Activated CD4-positive, alpha-beta T cell treated with anti-CD3 and anti-CD28 coated beads for 36 hours (primary cell): ENCODE measurements at regions of chr5 and their contacts with region 1.

Region 1: DNA sequence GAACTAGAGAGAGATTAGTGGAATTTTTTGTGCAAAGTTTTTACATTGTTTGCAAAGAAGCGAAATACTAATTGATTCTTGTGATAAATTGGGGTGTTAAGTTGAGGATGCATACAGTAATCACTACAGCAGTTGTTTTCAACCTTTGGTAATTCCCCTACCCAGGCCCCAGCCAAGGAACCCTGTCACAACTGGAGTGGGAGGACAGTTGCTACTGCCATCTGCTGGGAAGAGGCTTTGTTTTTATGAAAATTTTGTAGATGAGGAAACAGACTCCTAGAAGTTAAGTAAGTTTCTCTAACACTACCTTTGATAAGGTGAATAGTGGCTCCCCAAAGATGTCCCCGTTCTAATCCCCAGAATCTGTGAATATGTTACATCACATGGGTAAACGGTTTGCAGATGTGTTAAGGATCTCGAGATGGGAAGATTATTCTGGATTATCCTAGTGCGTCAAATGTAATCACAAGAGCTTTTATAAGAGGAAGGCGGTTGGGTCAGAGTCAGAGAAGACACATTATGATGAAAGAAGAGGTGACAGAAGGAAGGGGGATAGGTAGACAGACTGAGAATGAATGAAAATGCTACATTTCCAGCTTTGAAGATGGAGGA is 34.0 kb upstream of the PPP1R2B start:
- DNase-seq: peak; percentile 65
- ATAC-seq: peak; percentile 86
- H3K4me3 Mint-ChIP-seq: no peak overlapping the region
- H3K27ac Mint-ChIP-seq: no peak overlapping the region
- H3K4me1 Mint-ChIP-seq: no peaks in the 10 kb centered on the region
- H3K27me3 Mint-ChIP-seq: peaks cover 6% of the 10 kb centered on the region

Region 2: GRCh38 chr5:155616779-155617392 is 1199.2 kb before region 1 on chr5:
- CTCF ChIA-PET with region 1: no interaction called
- POLR2A ChIA-PET with region 1: no interaction called
- intact Hi-C with region 1: loop called in 1 of 2 experiments (anchors 5 kb)
- DNase-seq: peak; percentile 72
- ATAC-seq: peak; percentile 39
- H3K4me3 Mint-ChIP-seq: no peak overlapping the region
- H3K27ac Mint-ChIP-seq: no peak overlapping the region
- H3K4me1 Mint-ChIP-seq: no peaks in the 10 kb centered on the region
- H3K27me3 Mint-ChIP-seq: peaks cover 16% of the 10 kb centered on the region

Region 3: DNA sequence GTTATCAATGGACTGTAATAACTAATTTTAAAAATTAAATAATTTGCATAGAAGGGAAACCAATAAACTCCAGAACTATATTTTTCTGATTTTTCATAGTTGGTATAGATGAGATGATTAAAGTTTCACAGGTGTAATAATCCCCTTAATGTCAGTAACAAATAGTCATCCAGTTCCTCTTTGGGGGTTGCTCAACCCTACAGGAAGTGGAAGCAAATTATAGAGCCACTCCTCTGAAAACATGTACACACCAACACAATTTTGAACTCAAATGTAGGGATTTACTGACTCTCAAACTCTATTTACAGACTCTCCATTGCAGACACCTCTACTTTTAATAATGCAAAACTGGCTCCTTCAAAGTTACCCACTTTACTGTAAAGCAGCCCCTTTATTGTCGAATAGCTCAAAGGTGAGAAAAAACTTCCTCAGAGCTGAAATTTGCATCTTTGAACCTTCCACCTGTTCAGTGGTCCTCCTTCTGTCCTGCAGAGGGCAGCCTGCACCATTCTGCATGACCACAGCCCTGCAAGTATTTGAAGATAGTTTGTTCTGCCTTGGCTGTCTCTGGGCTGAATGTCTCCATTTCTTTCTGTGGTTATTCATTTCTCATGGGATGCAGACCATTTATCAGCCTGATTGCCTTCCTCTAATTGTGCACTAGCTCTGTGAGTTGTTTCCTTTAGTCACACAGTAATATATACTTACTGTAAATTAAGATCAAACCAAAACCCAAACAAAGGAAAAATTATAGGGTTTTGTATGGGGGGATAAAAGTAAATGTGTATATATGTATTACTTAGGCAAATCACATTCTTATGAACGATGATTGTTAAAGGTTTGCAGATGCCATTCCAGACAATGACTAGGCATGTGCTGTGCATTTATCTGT is 872.3 kb before region 1 on chr5:
- CTCF ChIA-PET with region 1: no interaction called
- POLR2A ChIA-PET with region 1: no interaction called
- intact Hi-C with region 1: loop called in 1 of 2 experiments (anchors 5 kb)
- DNase-seq: peak; percentile 58
- ATAC-seq: peak; percentile 58
- H3K4me3 Mint-ChIP-seq: no peak overlapping the region
- H3K27ac Mint-ChIP-seq: no peak overlapping the region
- H3K4me1 Mint-ChIP-seq: no peaks in the 10 kb centered on the region
- H3K27me3 Mint-ChIP-seq: peaks cover 10% of the 10 kb centered on the region

Region 4: DNA sequence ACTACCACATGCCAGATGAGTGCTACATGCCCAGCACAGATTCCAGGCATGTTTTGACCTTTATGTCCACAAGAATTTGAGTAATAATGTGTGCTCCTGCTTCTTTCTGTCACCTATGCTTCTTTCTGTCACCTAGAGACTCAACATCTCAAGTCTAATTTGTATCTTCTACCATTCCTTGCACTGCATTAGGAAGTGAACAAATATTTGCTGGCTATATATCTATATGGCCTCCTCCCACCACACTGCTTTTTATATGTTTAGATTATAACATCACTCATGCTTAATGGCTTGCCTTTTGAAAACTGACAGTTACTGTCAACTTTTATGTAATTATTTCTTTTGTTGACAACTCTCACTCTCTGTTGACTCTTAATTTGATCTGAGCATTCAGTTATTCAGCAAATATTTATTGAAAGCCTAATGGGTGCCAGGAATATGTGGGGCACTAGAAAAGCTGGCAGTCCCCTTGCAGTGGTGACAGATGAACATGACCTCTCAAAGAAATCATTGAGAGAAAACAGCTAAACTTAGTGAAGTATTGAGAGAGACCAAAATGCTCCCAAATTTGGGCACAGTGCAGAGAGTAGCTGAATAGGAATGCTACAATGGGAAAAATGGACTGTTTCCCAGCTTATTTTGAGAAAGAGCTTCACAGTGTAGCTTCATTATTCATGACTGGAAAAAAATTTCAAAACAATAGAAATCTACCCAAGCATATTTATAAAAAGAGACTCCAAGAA is 231.4 kb before region 1 on chr5:
- CTCF ChIA-PET with region 1: no interaction called
- POLR2A ChIA-PET with region 1: no interaction called
- intact Hi-C with region 1: no loop called
- DNase-seq: no peak
- ATAC-seq: no peak
- H3K4me3 Mint-ChIP-seq: no peak overlapping the region
- H3K27ac Mint-ChIP-seq: no peak overlapping the region
- H3K4me1 Mint-ChIP-seq: no peaks in the 10 kb centered on the region
- H3K27me3 Mint-ChIP-seq: peaks cover 34% of the 10 kb centered on the region

Region 5: DNA sequence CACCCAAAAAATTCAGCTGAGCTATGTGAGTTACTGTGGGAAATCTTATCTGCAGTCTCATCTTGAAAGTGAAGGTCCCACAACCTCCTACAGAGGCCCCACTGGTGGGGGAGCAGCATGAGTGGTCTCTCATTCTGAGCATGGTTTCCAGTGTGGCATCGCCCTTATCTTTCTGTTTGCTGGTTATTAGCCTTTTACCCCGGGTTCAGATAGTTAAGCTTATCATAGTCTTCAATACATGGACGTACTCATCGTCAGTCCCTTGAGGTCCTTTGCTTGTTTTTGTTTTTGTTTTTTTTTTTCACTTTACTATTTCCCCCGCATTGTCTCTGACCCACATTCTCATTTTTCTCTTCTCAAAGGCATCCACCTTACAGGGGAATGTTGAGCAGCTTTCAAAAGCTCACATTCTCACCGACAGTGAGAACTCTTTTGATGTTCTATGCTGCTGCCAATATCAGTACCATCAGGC is 300.4 kb after region 1 on chr5:
- CTCF ChIA-PET with region 1: no interaction called
- POLR2A ChIA-PET with region 1: no interaction called
- intact Hi-C with region 1: no loop called
- DNase-seq: peak; percentile 58
- ATAC-seq: peak; percentile 83
- H3K4me3 Mint-ChIP-seq: no peak overlapping the region
- H3K27ac Mint-ChIP-seq: peak overlapping the region; percentile 80
- H3K4me1 Mint-ChIP-seq: peaks cover 29% of the 10 kb centered on the region
- H3K27me3 Mint-ChIP-seq: no peaks in the 10 kb centered on the region